ENCODE measurements at regions of chr11 and their contacts with region 1.

Region 1: GRCh38 chr11:110077831-110078325 is 15.3 kb upstream of the ZC3H12C start:
- DNase-seq: no peak

Region 2: DNA sequence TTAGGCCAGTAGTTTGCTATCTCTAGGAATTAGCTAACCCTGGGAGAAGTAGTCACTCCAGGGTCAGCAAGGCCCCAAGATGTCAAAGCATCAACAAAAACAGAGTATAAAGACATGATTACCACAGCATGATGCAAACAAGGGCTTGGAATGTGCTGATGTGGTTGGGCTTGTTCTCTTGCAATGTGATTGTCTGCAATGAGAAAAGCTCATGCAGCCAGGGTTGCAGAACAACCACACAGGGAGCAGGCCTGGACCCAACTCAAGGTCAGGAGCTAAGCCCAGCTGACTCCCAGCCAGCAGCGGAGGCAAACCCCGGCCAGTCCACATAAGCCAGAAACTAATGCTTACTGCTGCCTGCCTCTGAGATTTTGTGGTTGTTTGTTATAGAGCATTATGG is 117.0 kb before region 1 on chr11:
- CTCF ChIA-PET with region 1: no interaction called
- POLR2A ChIA-PET with region 1: no interaction called
- DNase-seq: no peak

Region 3: DNA sequence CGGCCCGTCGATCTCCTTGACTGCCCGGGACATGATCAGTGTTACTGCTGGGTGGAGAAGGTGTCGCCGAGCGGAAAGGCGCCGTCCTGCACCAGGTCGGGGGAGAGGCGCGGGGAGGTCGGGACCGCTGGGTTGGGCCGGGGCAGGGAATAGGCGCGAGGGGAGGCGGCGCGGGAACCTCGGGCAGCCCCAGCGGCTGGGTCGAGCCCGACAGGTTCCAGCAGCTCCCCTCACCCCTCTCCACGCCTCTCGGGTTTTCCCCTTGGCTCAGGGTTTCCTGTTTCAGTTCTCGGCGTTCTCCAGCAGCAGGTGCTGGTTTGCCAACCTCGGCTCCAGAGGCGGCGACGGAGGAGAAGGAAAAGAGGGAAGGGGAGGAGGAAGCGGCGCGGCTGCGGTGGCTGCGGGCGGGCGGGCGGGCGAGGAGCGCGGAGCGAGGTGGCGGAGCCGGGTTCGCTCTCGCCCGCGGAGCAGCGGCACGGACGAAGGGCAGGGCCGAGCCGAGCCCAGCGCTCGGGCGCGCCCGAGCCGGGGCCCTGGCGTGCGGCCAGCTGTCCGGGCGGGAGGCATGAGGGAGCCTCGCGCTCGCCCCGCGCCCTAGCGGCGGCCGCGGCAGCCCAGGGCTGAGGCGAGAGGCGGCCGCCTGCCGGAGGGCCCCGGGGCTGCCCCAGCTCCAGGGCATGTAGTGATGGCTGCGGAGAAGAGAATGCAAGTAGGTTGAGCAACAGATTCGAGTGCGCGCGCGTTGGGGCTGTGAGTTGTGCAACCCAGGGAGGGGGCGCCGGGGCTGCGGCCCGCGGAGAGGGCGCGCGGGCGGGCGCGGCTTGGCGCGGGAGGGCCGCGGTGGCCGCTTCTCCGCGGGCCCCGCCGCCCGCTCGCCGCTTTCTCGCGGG is 14.9 kb after region 1 on chr11 and contains the start of gene ZC3H12C:
- CTCF ChIA-PET with region 1: interaction called, 6 read pairs
- POLR2A ChIA-PET with region 1: interaction called, 13 read pairs
- DNase-seq: peak; percentile 77